CD14-positive monocyte (primary cell): ENCODE measurements at regions of chr17 and their contacts with region 1.

Region 1: GRCh38 chr17:51472670-51473205 is 212.4 kb downstream of the UTP18 start:
- DNase-seq: no peak
- H3K4me3 ChIP-seq: no peak overlapping the region
- H3K4me3 Mint-ChIP-seq: no peak overlapping the region
- H3K27ac ChIP-seq: no peak overlapping the region
- H3K27ac Mint-ChIP-seq: peak overlapping the region in 1 of 7 donors; percentile 24
- H3K4me1 ChIP-seq: no peaks in the 10 kb centered on the region
- H3K4me1 Mint-ChIP-seq: no peaks in the 10 kb centered on the region
- H3K27me3 ChIP-seq: no peaks in the 10 kb centered on the region
- H3K27me3 Mint-ChIP-seq: peaks cover 8 to 21% (median 9%) of the 10 kb centered on the region in 3 donors
- CTCF ChIP-seq: no peak

Region 2: GRCh38 chr17:50630524-50631194 is 842.1 kb before region 1 on chr17:
- intact Hi-C with region 1: no loop called
- DNase-seq: peak in 2 of 3 donors; percentile 39
- H3K4me3 ChIP-seq: no peak overlapping the region
- H3K4me3 Mint-ChIP-seq: peak overlapping the region in 1 of 2 donors; percentile 55
- H3K27ac ChIP-seq: no peak overlapping the region
- H3K27ac Mint-ChIP-seq: no peak overlapping the region
- H3K4me1 ChIP-seq: peaks cover 16 to 35% of the 10 kb centered on the region in 2 donors
- H3K4me1 Mint-ChIP-seq: peaks cover 27% of the 10 kb centered on the region
- H3K27me3 ChIP-seq: peaks cover 1 to 56% of the 10 kb centered on the region in 2 donors
- H3K27me3 Mint-ChIP-seq: peaks cover 65 to 87% (median 70%) of the 10 kb centered on the region in 3 donors
- CTCF ChIP-seq: peak; percentile 90

Region 3: GRCh38 chr17:51085185-51085805 is 387.4 kb before region 1 on chr17:
- intact Hi-C with region 1: no loop called
- DNase-seq: no peak
- H3K4me3 ChIP-seq: no peak overlapping the region
- H3K4me3 Mint-ChIP-seq: no peak overlapping the region
- H3K27ac ChIP-seq: no peak overlapping the region
- H3K27ac Mint-ChIP-seq: peak overlapping the region in 1 of 7 donors; percentile 25
- H3K4me1 ChIP-seq: peaks cover 22 to 25% of the 10 kb centered on the region in 2 donors
- H3K4me1 Mint-ChIP-seq: peaks cover 35% of the 10 kb centered on the region
- H3K27me3 ChIP-seq: no peaks in the 10 kb centered on the region
- H3K27me3 Mint-ChIP-seq: peaks cover 0 to 2% (median 0%) of the 10 kb centered on the region in 3 donors
- CTCF ChIP-seq: no peak

Region 4: GRCh38 chr17:51351890-51352289 is 120.8 kb before region 1 on chr17:
- intact Hi-C with region 1: no loop called
- DNase-seq: no peak
- H3K4me3 ChIP-seq: no peak overlapping the region
- H3K4me3 Mint-ChIP-seq: no peak overlapping the region
- H3K27ac ChIP-seq: no peak overlapping the region
- H3K27ac Mint-ChIP-seq: no peak overlapping the region
- H3K4me1 ChIP-seq: no peaks in the 10 kb centered on the region
- H3K4me1 Mint-ChIP-seq: peaks cover 11% of the 10 kb centered on the region
- H3K27me3 ChIP-seq: no peaks in the 10 kb centered on the region
- H3K27me3 Mint-ChIP-seq: peaks cover 10 to 26% (median 15%) of the 10 kb centered on the region in 3 donors
- CTCF ChIP-seq: no peak

Region 5: GRCh38 chr17:51419476-51419875 is 53.3 kb before region 1 on chr17:
- intact Hi-C with region 1: loop called in 1 of 2 experiments (anchors 10 kb)
- DNase-seq: no peak
- H3K4me3 ChIP-seq: no peak overlapping the region
- H3K4me3 Mint-ChIP-seq: no peak overlapping the region
- H3K27ac ChIP-seq: no peak overlapping the region
- H3K27ac Mint-ChIP-seq: no peak overlapping the region
- H3K4me1 ChIP-seq: no peaks in the 10 kb centered on the region
- H3K4me1 Mint-ChIP-seq: no peaks in the 10 kb centered on the region
- H3K27me3 ChIP-seq: no peaks in the 10 kb centered on the region
- H3K27me3 Mint-ChIP-seq: peaks cover 2 to 9% (median 7%) of the 10 kb centered on the region in 3 donors
- CTCF ChIP-seq: no peak